AG04449 (cell line): ENCODE measurements at regions of chr13 and their contacts with region 1.

Region 1: DNA sequence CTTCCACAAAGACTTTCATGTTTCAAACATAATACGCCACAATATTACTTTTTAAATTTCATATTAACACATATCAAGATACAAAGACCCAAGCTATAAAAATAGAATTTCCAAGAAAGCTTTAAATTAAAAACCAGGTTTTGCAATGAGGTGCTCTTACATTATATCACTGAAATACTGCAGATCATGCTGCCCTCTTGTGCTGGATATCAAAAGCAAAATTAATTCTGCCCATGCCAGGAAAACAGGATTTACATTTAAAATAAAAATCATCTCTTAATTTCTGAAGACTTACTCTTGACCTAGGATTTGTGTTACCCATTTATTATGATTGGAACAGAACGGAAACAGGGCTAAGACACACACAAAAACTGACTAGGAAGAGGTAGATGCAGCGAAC is 145.0 kb downstream of the ABCC4 start:
- DNase-seq: no peak
- H3K4me3 ChIP-seq: no peak overlapping the region
- CTCF ChIP-seq: peak; percentile 24

Region 2: GRCh38 chr13:94620286-94620896 is 535.8 kb before region 1 on chr13:
- CTCF ChIA-PET with region 1: interaction called, 23 read pairs
- POLR2A ChIA-PET with region 1: no interaction called
- DNase-seq: no peak
- H3K4me3 ChIP-seq: no peak overlapping the region
- CTCF ChIP-seq: peak; percentile 61

Region 3: GRCh38 chr13:94660695-94661326 is 495.4 kb before region 1 on chr13:
- CTCF ChIA-PET with region 1: interaction called, 30 read pairs
- POLR2A ChIA-PET with region 1: no interaction called
- DNase-seq: no peak
- H3K4me3 ChIP-seq: no peak overlapping the region
- CTCF ChIP-seq: no peak

Region 4: GRCh38 chr13:94674609-94675348 is 481.4 kb before region 1 on chr13:
- CTCF ChIA-PET with region 1: interaction called, 46 read pairs
- POLR2A ChIA-PET with region 1: no interaction called
- DNase-seq: no peak
- H3K4me3 ChIP-seq: no peak overlapping the region
- CTCF ChIP-seq: peak; percentile 62

Region 5: DNA sequence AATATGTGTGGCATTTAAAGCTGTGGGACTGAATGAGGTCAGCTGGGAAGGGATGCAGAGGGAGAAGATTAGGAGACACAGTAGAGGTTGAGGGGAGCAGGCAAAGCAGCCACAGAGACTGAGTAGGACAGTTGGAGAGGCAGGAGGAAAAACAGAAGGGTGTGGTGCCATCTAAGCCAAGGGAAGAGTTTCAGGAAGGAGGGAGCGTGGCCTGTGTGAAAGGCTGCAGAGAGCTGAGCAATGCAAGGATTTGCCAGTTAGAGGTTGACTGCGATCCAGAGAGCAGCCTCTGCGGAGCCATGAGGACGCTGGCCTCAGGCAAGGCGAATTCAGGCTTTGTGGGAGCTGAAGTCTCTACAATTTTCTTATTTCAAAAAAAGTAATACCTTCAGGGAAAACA is 472.8 kb before region 1 on chr13:
- CTCF ChIA-PET with region 1: interaction called, 10 read pairs
- POLR2A ChIA-PET with region 1: no interaction called
- DNase-seq: no peak
- H3K4me3 ChIP-seq: no peak overlapping the region
- CTCF ChIP-seq: no peak

Region 6: GRCh38 chr13:94712812-94713560 is 443.2 kb before region 1 on chr13:
- CTCF ChIA-PET with region 1: interaction called, 10 read pairs
- POLR2A ChIA-PET with region 1: no interaction called
- DNase-seq: peak; percentile 2
- H3K4me3 ChIP-seq: no peak overlapping the region; the same call in 1 of the 2 replicates
- CTCF ChIP-seq: no peak

Region 7: GRCh38 chr13:94988654-94989053 is 167.6 kb before region 1 on chr13:
- CTCF ChIA-PET with region 1: interaction called, 18 read pairs
- POLR2A ChIA-PET with region 1: no interaction called
- DNase-seq: no peak
- H3K4me3 ChIP-seq: no peak overlapping the region
- CTCF ChIP-seq: no peak